MCF 10A (cell line): ENCODE measurements at regions of chr21 and their contacts with region 1.

Region 1: DNA sequence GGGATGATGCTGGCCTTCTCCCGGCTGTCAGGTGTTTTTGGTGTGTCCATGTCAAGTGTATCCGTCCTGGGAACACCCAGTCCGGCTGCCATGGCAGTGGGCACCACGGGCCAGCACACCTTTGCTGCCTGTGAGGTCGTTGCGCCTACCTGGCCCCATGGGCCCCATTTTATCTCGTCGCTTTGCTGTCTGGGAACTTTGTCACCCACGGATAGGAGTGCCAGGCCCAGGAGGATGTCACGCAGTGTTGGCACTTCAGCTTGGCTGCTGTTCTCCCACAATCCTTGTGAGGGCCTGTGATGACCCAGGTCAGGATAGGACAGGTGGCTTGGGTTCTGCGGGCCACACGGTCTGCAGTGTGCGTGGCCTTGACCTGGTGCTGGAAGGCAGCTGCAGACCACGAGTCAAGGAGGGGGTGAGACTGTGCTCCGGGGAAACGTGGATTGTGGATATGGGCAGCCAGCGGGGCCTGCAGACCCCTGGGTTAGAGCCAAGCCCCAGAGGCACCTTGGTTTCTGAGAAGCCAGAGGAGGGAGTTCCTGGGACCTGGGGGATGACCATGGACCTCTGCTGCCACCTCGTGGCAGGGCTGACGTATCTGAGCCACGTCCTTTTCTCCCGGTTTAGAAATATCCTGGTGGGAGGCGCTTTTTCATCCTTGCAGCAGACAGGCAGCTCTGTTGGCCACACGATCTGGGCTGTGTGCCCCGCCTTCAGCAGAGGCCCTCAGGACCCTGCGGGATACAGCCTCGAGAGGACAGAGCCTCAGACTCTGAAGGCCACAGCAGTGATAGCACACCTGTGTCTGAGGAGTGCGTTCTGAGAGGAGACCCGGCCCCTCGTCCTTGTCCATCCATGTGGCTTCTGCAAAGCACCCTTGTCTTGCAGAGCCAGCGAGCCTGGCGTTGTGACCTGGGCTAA is 161.1 kb upstream of the COL6A1 start:
- DNase-seq: peak; percentile 85
- H3K4me3 Mint-ChIP-seq: no peak overlapping the region
- H3K27ac Mint-ChIP-seq: peak overlapping the region; percentile 11
- H3K4me1 Mint-ChIP-seq: peaks cover 22% of the 10 kb centered on the region
- H3K27me3 Mint-ChIP-seq: peaks cover 30% of the 10 kb centered on the region
- CTCF ChIP-seq: peak; percentile 90

Region 2: GRCh38 chr21:45287438-45288391 is 532.7 kb before region 1 on chr21 and contains the start of gene POFUT2:
- CTCF ChIA-PET with region 1: interaction called, 3 read pairs
- POLR2A ChIA-PET with region 1: no interaction called
- intact Hi-C with region 1: loop called (anchors 2 kb)
- DNase-seq: peak; percentile 95
- H3K4me3 Mint-ChIP-seq: peak within 1 kb of the TSS; percentile 74
- H3K27ac Mint-ChIP-seq: peak within 1 kb of the TSS; percentile 31
- H3K4me1 Mint-ChIP-seq: peaks cover 9% of the 10 kb centered on the region
- H3K27me3 Mint-ChIP-seq: no peaks in the 10 kb centered on the region
- CTCF ChIP-seq: no peak
- total RNA-seq, gene POFUT2: 25.2 and 31.3 TPM in 2 replicates

Region 3: DNA sequence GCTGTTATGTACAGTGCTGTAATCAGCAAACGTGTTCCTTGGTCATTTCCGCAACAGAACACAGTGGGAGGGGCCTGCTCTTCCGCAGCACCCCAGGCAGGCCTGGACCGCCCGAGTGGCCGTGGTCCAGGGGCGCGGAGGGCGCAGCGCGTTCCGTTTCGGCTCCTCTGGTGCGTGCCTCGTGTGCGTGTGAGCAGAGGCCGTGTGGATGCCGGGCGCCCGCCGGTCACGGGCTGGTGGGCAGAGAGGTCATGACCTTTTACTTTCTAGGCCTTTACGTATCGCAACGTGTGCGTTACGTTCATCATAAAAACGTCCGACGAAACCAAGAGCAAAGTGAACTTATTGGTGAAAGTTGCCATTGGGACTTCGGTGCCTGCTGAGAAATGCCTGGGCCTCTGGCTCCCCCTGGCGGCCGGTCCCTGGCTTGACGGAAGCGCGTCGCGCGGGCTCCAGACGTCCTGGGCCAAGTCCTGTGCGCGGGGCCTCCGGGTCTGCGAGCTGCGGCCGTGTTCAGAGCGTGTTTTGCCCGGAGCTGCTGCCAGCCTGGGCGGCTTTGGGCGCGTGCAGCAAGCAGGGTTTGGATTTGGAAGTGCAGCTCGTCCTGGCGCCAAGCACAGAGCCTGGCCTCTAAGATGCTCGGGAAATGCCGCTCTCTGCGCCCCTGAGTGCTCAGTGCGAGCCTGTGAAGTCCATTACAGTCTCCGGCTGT is 381.1 kb before region 1 on chr21:
- CTCF ChIA-PET with region 1: interaction called, 3 read pairs
- POLR2A ChIA-PET with region 1: no interaction called
- intact Hi-C with region 1: loop called (anchors 5 kb)
- DNase-seq: peak; percentile 68
- H3K4me3 Mint-ChIP-seq: no peak overlapping the region
- H3K27ac Mint-ChIP-seq: no peak overlapping the region
- H3K4me1 Mint-ChIP-seq: no peaks in the 10 kb centered on the region
- H3K27me3 Mint-ChIP-seq: peaks cover 7% of the 10 kb centered on the region
- CTCF ChIP-seq: peak; percentile 93

Region 4: GRCh38 chr21:45554477-45555175 is 265.8 kb before region 1 on chr21:
- CTCF ChIA-PET with region 1: interaction called, 53 read pairs
- POLR2A ChIA-PET with region 1: interaction called, 3 read pairs
- intact Hi-C with region 1: loop called (anchors 1 kb)
- DNase-seq: peak; percentile 71
- H3K4me3 Mint-ChIP-seq: peak overlapping the region; percentile 83
- H3K27ac Mint-ChIP-seq: peak overlapping the region; percentile 43
- H3K4me1 Mint-ChIP-seq: peaks cover 19% of the 10 kb centered on the region
- H3K27me3 Mint-ChIP-seq: no peaks in the 10 kb centered on the region
- CTCF ChIP-seq: peak; percentile 79

Region 5: GRCh38 chr21:45698493-45699184 is 121.8 kb before region 1 on chr21:
- CTCF ChIA-PET with region 1: interaction called, 3 read pairs
- POLR2A ChIA-PET with region 1: no interaction called
- intact Hi-C with region 1: loop called (anchors 1 kb)
- DNase-seq: peak; percentile 99
- H3K4me3 Mint-ChIP-seq: no peak overlapping the region
- H3K27ac Mint-ChIP-seq: peak overlapping the region; percentile 32
- H3K4me1 Mint-ChIP-seq: peaks cover 20% of the 10 kb centered on the region
- H3K27me3 Mint-ChIP-seq: no peaks in the 10 kb centered on the region
- CTCF ChIP-seq: no peak